ENCODE measurements at regions of chr15 and their contacts with region 1.

Region 1: GRCh38 chr15:99928429-99928981 is 195.3 kb upstream of the LYSMD4 start:
- DNase-seq: peak; percentile 85
- ATAC-seq: peak; percentile 92
- H3K4me3 Mint-ChIP-seq: peak overlapping the region; percentile 86
- H3K27ac Mint-ChIP-seq: peak overlapping the region; percentile 78
- H3K4me1 Mint-ChIP-seq: peaks cover 16% of the 10 kb centered on the region
- H3K27me3 Mint-ChIP-seq: peaks cover 4% of the 10 kb centered on the region
- CTCF ChIP-seq: no peak

Region 2: GRCh38 chr15:98865397-98866339 is 1062.8 kb before region 1 on chr15:
- CTCF ChIA-PET with region 1: no interaction called
- POLR2A ChIA-PET with region 1: no interaction called
- intact Hi-C with region 1: loop called (anchors 2 kb)
- DNase-seq: peak; percentile 58
- ATAC-seq: peak; percentile 95
- H3K4me3 Mint-ChIP-seq: peak overlapping the region; percentile 84
- H3K27ac Mint-ChIP-seq: peak overlapping the region; percentile 90
- H3K4me1 Mint-ChIP-seq: peaks cover 14% of the 10 kb centered on the region
- H3K27me3 Mint-ChIP-seq: no peaks in the 10 kb centered on the region
- CTCF ChIP-seq: no peak

Region 3: GRCh38 chr15:99733268-99734039 is 195.1 kb before region 1 on chr15 and contains the start of gene LYSMD4:
- CTCF ChIA-PET with region 1: no interaction called
- POLR2A ChIA-PET with region 1: no interaction called
- intact Hi-C with region 1: loop called (anchors 5 kb)
- DNase-seq: peak; percentile 95
- ATAC-seq: peak; percentile 99
- H3K4me3 Mint-ChIP-seq: peak within 1 kb of the TSS; percentile 85
- H3K27ac Mint-ChIP-seq: peak within 1 kb of the TSS; percentile 83
- H3K4me1 Mint-ChIP-seq: peaks cover 14% of the 10 kb centered on the region
- H3K27me3 Mint-ChIP-seq: no peaks in the 10 kb centered on the region
- CTCF ChIP-seq: no peak
- total RNA-seq, gene LYSMD4: 4.7 and 6.1 TPM in 2 replicates

Region 4: GRCh38 chr15:99967841-99968371 is 39.4 kb after region 1 on chr15:
- CTCF ChIA-PET with region 1: no interaction called
- POLR2A ChIA-PET with region 1: no interaction called
- intact Hi-C with region 1: no loop called
- DNase-seq: no peak
- ATAC-seq: no peak
- H3K4me3 Mint-ChIP-seq: no peak overlapping the region
- H3K27ac Mint-ChIP-seq: no peak overlapping the region
- H3K4me1 Mint-ChIP-seq: no peaks in the 10 kb centered on the region
- H3K27me3 Mint-ChIP-seq: peaks cover 8% of the 10 kb centered on the region
- CTCF ChIP-seq: no peak

Region 5: GRCh38 chr15:100349696-100350433 is 421.4 kb after region 1 on chr15:
- CTCF ChIA-PET with region 1: interaction called, 4 read pairs
- POLR2A ChIA-PET with region 1: no interaction called
- intact Hi-C with region 1: loop called (anchors 2 kb)
- DNase-seq: peak; percentile 69
- ATAC-seq: peak; percentile 92
- H3K4me3 Mint-ChIP-seq: peak overlapping the region; percentile 90
- H3K27ac Mint-ChIP-seq: peak overlapping the region; percentile 46
- H3K4me1 Mint-ChIP-seq: peaks cover 10% of the 10 kb centered on the region
- H3K27me3 Mint-ChIP-seq: peaks cover 10% of the 10 kb centered on the region
- CTCF ChIP-seq: peak; percentile 19

Region 6: GRCh38 chr15:100873029-100873677 is 944.6 kb after region 1 on chr15:
- CTCF ChIA-PET with region 1: interaction called, 3 read pairs
- POLR2A ChIA-PET with region 1: no interaction called
- intact Hi-C with region 1: loop called (anchors 5 kb)
- DNase-seq: no peak
- ATAC-seq: peak; percentile 71
- H3K4me3 Mint-ChIP-seq: no peak overlapping the region
- H3K27ac Mint-ChIP-seq: no peak overlapping the region
- H3K4me1 Mint-ChIP-seq: no peaks in the 10 kb centered on the region
- H3K27me3 Mint-ChIP-seq: peaks cover 28% of the 10 kb centered on the region
- CTCF ChIP-seq: peak; percentile 60

Region 7: GRCh38 chr15:101294731-101295606 is 1366.5 kb after region 1 on chr15 and contains the start of gene SNRPA1:
- CTCF ChIA-PET with region 1: no interaction called
- POLR2A ChIA-PET with region 1: no interaction called
- intact Hi-C with region 1: loop called (anchors 10 kb)
- DNase-seq: peak; percentile 99
- ATAC-seq: peak; percentile 83
- H3K4me3 Mint-ChIP-seq: peak within 1 kb of the TSS; percentile 97
- H3K27ac Mint-ChIP-seq: peak within 1 kb of the TSS; percentile 95
- H3K4me1 Mint-ChIP-seq: peaks cover 45% of the 10 kb centered on the region
- H3K27me3 Mint-ChIP-seq: no peaks in the 10 kb centered on the region
- CTCF ChIP-seq: no peak
- total RNA-seq, gene SNRPA1: 119 and 122 TPM in 2 replicates